GM18951 (cell line): ENCODE measurements at regions of chr18 and their contacts with region 1.

Region 1: GRCh38 chr18:51668101-51668500 is 470.6 kb upstream of the MEX3C start:
- POLR2A ChIP-seq: no peak

Region 2: DNA sequence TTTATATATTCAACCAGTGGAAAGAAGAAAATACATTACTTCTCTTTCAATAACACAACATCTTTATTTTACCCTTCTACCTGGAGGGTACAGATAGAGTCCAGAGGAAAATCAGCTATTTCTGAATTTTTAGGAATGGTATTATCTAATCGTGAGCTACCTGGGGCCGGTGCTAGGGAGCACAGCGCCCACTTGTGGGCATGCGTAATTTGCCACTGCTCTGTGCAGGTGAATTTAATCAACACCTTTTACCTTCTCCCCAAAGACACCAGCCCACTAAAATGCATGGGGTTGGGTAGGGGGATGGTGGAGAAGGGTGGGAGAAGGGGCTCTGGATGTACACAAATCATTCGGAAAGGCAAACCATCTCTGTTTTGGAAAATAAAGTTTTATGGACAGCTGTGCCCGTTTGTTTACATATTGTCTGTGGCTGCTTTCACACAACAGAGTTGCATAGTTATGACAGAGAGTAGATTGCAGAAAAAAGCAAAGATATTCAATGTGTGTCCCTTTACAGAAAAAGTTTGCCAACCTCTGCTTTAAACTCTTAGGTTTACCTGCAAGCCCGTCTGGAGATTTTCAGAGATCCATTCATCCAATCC is 620.4 kb after region 1 on chr18:
- in situ Hi-C with region 1: loop called (anchors 10 kb)
- POLR2A ChIP-seq: no peak